Natural killer cell (primary cell): ENCODE measurements at regions of chr12 and their contacts with region 1.

Region 1: GRCh38 chr12:57182921-57183790 is 33.4 kb upstream of the NXPH4 start:
- DNase-seq: peak; percentile 78 to 89
- ATAC-seq: peak; percentile 87 to 100 (median 98)
- H3K4me3 ChIP-seq: no peak overlapping the region
- H3K4me3 Mint-ChIP-seq: no peak overlapping the region
- H3K27ac ChIP-seq: no peak overlapping the region
- H3K27ac Mint-ChIP-seq: peak overlapping the region in 1 of 2 donors; percentile 58
- H3K4me1 ChIP-seq: no peaks in the 10 kb centered on the region
- H3K4me1 Mint-ChIP-seq: peaks cover 0 to 7% of the 10 kb centered on the region in 2 donors
- H3K27me3 ChIP-seq: no peaks in the 10 kb centered on the region
- H3K27me3 Mint-ChIP-seq: no peaks in the 10 kb centered on the region
- CTCF ChIP-seq: peak; percentile 85

Region 2: GRCh38 chr12:57069523-57069922 is 113.6 kb before region 1 on chr12:
- intact Hi-C with region 1: loop called (anchors 1 kb)
- DNase-seq: peak in 1 of 2 donors; percentile 88
- ATAC-seq: peak; percentile 99 to 100 (median 100)
- H3K4me3 ChIP-seq: no peak overlapping the region
- H3K4me3 Mint-ChIP-seq: no peak overlapping the region
- H3K27ac ChIP-seq: peak overlapping the region; percentile 23
- H3K27ac Mint-ChIP-seq: peak overlapping the region; percentile 66 to 89
- H3K4me1 ChIP-seq: peaks cover 4% of the 10 kb centered on the region
- H3K4me1 Mint-ChIP-seq: peaks cover 8 to 9% of the 10 kb centered on the region in 2 donors
- H3K27me3 ChIP-seq: no peaks in the 10 kb centered on the region
- H3K27me3 Mint-ChIP-seq: no peaks in the 10 kb centered on the region
- CTCF ChIP-seq: peak; percentile 86

Region 3: GRCh38 chr12:57124259-57124877 is 58.8 kb before region 1 on chr12:
- intact Hi-C with region 1: loop called (anchors 1 kb)
- DNase-seq: peak; percentile 61 to 90
- ATAC-seq: peak; percentile 79 to 91 (median 82)
- H3K4me3 ChIP-seq: no peak overlapping the region
- H3K4me3 Mint-ChIP-seq: peak overlapping the region; percentile 43
- H3K27ac ChIP-seq: no peak overlapping the region
- H3K27ac Mint-ChIP-seq: no peak overlapping the region
- H3K4me1 ChIP-seq: peaks cover 23% of the 10 kb centered on the region
- H3K4me1 Mint-ChIP-seq: peaks cover 11 to 20% of the 10 kb centered on the region in 2 donors
- H3K27me3 ChIP-seq: peaks cover 19% of the 10 kb centered on the region
- H3K27me3 Mint-ChIP-seq: peaks cover 8 to 9% of the 10 kb centered on the region in 2 donors
- CTCF ChIP-seq: peak; percentile 85